ENCODE measurements at regions of chr17 and their contacts with region 1.

Region 1: GRCh38 chr17:45640141-45640850 is 143.8 kb upstream of the CRHR1 start:
- DNase-seq: peak; percentile 76 to 87
- ATAC-seq: peak; percentile 67
- H3K4me3 ChIP-seq: no peak overlapping the region
- H3K27ac ChIP-seq: no peak overlapping the region
- H3K4me1 ChIP-seq: no peaks in the 10 kb centered on the region
- H3K27me3 ChIP-seq: peaks cover 0 to 1% of the 10 kb centered on the region in 2 donors

Region 2: GRCh38 chr17:45828628-45829027 is 188.3 kb after region 1 on chr17:
- intact Hi-C with region 1: loop called (anchors 1 kb)
- DNase-seq: no peak
- ATAC-seq: no peak
- H3K4me3 ChIP-seq: no peak overlapping the region
- H3K27ac ChIP-seq: no peak overlapping the region
- H3K4me1 ChIP-seq: no peaks in the 10 kb centered on the region
- H3K27me3 ChIP-seq: no peaks in the 10 kb centered on the region